ENCODE measurements at regions of chr13 and their contacts with region 1.

Region 1: GRCh38 chr13:93233997-93234416 is 7.4 kb downstream of the GPC6 start:
- DNase-seq: peak; percentile 50
- H3K4me3 Mint-ChIP-seq: no peak overlapping the region
- H3K27ac Mint-ChIP-seq: no peak overlapping the region
- H3K4me1 Mint-ChIP-seq: peaks cover 39% of the 10 kb centered on the region
- H3K27me3 Mint-ChIP-seq: no peaks in the 10 kb centered on the region
- CTCF ChIP-seq: no peak

Region 2: GRCh38 chr13:93248627-93249047 is 14.6 kb after region 1 on chr13:
- CTCF ChIA-PET with region 1: interaction called, 22 read pairs
- POLR2A ChIA-PET with region 1: interaction called, 64 read pairs
- intact Hi-C with region 1: no loop called
- DNase-seq: peak; percentile 53
- H3K4me3 Mint-ChIP-seq: no peak overlapping the region
- H3K27ac Mint-ChIP-seq: peak overlapping the region; percentile 97
- H3K4me1 Mint-ChIP-seq: peaks cover 37% of the 10 kb centered on the region
- H3K27me3 Mint-ChIP-seq: no peaks in the 10 kb centered on the region
- CTCF ChIP-seq: peak; percentile 24

Region 3: DNA sequence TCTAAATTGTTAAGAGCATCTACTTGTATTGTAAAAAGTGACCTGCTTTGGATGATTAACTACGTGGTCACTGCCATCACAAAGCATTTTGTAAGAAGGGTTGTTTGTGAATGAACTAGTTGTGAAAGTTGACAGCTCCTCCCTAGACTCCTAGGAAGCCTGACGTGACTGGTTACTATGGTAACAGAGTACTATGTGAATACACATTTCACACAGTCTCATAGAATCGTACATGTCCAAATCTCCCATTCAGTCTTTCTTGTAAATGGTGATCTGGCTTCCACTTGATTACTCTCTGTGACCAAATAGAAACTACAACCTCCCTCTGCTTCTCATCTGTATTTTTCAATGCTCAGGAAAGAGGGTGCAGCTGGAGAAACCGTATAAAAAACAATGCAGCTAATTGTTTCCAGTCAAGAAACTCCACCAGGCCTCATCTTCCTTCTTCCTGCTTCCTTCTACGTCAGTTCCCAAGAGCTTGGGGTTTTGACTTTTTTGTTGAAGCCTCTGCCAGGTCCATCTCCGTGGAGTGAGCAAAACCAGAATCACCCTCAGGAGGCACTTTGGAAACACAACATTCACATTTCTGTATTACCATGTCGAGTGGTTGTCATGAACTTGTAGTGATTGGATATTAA is 76.0 kb after region 1 on chr13:
- CTCF ChIA-PET with region 1: no interaction called
- POLR2A ChIA-PET with region 1: no interaction called
- intact Hi-C with region 1: no loop called
- DNase-seq: peak; percentile 81
- H3K4me3 Mint-ChIP-seq: no peak overlapping the region
- H3K27ac Mint-ChIP-seq: peak overlapping the region; percentile 64
- H3K4me1 Mint-ChIP-seq: peaks cover 19% of the 10 kb centered on the region
- H3K27me3 Mint-ChIP-seq: no peaks in the 10 kb centered on the region
- CTCF ChIP-seq: no peak

Measured in MCF 10A (cell line).